ENCODE measurements at regions of chr22 and their contacts with region 1.

Region 1: GRCh38 chr22:19761500-19762314 is 1.1 kb downstream of the TBX1 start:
- DNase-seq: no peak
- H3K4me3 Mint-ChIP-seq: no peak overlapping the region
- H3K27ac Mint-ChIP-seq: peak overlapping the region; percentile 75
- H3K4me1 Mint-ChIP-seq: peaks cover 17% of the 10 kb centered on the region
- H3K27me3 Mint-ChIP-seq: peaks cover 58% of the 10 kb centered on the region

Region 2: DNA sequence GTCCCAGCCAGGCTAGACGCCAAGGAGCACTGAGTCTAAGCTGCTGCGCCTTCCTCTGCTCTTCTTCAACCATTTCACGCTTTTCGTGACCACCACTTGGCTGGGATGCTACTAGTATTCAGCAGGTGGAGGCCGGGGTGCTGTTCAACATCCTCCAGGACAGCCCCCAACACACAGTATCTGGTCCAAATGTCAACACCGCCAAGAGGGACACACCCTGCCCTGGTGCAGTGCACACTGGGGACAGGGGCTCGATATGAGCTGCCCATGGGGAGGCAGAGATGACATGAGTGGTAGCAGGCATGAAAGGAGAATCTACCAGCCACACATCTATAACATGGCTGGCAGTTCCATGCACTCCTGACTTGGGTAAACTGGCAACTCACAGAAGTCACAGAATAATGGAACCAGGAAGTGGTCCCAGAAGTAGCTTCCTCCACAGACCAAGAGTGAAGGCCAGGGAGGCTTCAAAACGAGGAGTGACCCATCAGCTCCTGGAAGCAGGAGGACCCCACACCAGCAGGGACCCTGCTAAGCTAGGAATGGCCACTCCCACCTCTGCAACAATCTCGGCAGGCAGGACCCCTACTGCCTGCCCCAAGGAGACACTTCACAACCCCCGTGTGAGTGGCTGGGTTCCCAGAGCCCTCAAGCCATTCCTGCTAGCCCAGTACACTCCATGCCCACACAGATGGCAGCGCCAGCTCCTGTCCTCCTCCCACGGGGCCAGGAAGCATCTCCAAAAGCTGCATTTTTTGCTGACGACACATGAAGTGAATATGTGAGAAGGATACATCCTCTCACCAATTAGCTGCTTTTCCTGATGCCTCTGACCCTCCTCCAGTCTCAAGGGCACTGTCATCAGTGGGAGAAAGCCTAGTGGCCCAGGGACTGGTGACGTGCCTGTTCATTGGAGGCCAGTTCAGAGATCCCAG is 718.3 kb before region 1 on chr22:
- intact Hi-C with region 1: no loop called
- DNase-seq: no peak
- H3K4me3 Mint-ChIP-seq: no peak overlapping the region
- H3K27ac Mint-ChIP-seq: no peak overlapping the region
- H3K4me1 Mint-ChIP-seq: no peaks in the 10 kb centered on the region
- H3K27me3 Mint-ChIP-seq: no peaks in the 10 kb centered on the region

Region 3: DNA sequence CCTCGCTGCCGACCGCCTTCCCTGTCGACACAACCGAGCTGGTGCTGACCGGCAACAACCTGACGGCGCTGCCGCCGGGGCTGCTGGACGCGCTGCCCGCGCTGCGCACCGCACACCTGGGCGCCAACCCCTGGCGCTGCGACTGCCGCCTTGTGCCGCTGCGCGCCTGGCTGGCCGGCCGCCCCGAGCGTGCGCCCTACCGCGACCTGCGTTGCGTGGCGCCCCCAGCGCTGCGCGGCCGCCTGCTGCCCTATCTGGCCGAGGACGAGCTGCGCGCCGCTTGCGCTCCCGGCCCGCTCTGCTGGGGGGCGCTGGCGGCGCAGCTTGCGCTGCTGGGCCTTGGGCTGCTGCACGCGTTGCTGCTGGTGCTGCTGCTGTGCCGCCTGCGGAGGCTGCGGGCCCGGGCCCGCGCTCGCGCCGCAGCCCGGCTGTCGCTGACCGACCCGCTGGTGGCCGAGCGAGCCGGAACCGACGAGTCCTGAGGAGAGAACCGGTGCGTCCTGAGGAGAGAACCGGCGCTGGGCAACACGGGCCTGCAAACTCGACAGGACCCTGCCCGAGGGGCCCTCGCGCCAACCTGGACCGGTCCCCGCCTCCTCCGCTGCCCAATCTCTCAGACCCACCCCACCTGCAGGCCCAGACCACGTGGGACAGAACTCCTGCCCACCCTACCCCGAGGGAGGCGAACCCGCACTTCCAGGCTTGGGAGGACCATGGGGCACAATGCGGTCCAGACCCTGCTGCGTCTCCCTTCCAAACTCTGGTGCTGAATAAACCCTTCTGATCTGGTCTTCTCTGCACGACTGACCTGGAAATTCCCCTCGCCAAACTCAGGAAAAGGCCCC is 37.5 kb before region 1 on chr22:
- intact Hi-C with region 1: loop called (anchors 2 kb)
- DNase-seq: no peak
- H3K4me3 Mint-ChIP-seq: no peak overlapping the region
- H3K27ac Mint-ChIP-seq: no peak overlapping the region
- H3K4me1 Mint-ChIP-seq: peaks cover 4% of the 10 kb centered on the region
- H3K27me3 Mint-ChIP-seq: peaks cover 46% of the 10 kb centered on the region